ENCODE measurements at regions of chr13 and their contacts with region 1.

Region 1: DNA sequence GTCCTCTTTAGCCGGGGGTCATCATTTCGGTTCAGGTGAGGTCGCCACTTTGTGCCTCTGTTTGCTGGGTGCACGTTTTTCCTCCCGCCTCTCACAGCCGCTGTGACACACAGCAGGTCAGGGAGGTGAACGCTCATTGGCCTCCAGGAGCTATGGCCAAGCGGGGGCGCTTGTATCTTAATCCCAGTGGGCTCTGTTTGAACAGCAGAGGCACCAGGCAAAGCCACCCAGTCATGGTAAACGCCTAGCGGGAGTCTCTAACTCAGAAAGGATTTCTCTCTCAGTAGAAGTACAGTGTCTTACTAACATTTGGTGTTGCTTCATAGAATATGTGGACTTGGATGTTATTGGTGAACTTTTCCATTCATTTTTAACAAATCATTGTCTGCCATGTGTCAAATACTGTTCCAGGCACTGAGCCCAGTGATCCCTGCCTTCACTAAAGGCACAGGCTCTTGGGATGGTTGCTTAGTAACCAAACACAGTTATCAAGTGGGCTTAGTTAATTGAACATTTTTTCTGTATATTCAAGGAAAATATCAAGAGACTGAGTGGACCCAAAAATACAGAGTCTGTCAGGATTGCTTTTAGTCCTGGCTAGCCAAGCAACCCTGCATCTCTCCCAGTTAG is 186.7 kb downstream of the STK24 start:
- DNase-seq: no peak
- H3K4me3 ChIP-seq: no peak overlapping the region
- H3K27ac ChIP-seq: no peak overlapping the region
- H3K4me1 ChIP-seq: no peaks in the 10 kb centered on the region
- H3K27me3 ChIP-seq: no peaks in the 10 kb centered on the region
- CTCF ChIP-seq: no peak

Region 2: DNA sequence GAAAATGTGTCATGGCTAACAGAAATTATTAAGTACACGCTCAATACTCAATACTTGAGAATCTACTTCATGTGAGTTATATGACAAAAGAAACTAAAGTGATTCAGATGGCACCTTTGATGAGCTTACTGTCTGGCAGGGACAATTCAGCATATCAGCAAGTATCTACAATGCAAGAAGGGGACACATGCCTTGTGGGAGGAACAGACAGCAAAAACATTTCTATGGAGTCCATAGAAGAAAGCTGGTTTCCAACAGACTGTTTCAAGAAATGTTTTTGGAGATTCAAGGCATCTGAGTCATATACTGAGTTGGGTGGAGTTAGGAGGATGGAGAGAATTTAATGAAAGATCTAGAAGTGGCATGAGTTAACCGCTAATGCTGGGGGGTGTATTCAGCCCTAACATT is 1113.3 kb before region 1 on chr13:
- CTCF ChIA-PET with region 1: interaction called, 10 read pairs
- POLR2A ChIA-PET with region 1: no interaction called
- intact Hi-C with region 1: no loop called
- DNase-seq: no peak
- H3K4me3 ChIP-seq: no peak overlapping the region
- H3K27ac ChIP-seq: 0 out of 2 replicates have a peak overlapping the region, but pooled peaks have one; percentile 61
- H3K4me1 ChIP-seq: peaks cover 98% of the 10 kb centered on the region
- H3K27me3 ChIP-seq: no peaks in the 10 kb centered on the region
- CTCF ChIP-seq: no peak

Region 3: GRCh38 chr13:97879646-97880310 is 510.4 kb before region 1 on chr13:
- CTCF ChIA-PET with region 1: no interaction called
- POLR2A ChIA-PET with region 1: no interaction called
- intact Hi-C with region 1: no loop called
- DNase-seq: peak; percentile 35 to 76
- H3K4me3 ChIP-seq: no peak overlapping the region
- H3K27ac ChIP-seq: no peak overlapping the region
- H3K4me1 ChIP-seq: peaks cover 13% of the 10 kb centered on the region
- H3K27me3 ChIP-seq: no peaks in the 10 kb centered on the region
- CTCF ChIP-seq: no peak

Region 4: DNA sequence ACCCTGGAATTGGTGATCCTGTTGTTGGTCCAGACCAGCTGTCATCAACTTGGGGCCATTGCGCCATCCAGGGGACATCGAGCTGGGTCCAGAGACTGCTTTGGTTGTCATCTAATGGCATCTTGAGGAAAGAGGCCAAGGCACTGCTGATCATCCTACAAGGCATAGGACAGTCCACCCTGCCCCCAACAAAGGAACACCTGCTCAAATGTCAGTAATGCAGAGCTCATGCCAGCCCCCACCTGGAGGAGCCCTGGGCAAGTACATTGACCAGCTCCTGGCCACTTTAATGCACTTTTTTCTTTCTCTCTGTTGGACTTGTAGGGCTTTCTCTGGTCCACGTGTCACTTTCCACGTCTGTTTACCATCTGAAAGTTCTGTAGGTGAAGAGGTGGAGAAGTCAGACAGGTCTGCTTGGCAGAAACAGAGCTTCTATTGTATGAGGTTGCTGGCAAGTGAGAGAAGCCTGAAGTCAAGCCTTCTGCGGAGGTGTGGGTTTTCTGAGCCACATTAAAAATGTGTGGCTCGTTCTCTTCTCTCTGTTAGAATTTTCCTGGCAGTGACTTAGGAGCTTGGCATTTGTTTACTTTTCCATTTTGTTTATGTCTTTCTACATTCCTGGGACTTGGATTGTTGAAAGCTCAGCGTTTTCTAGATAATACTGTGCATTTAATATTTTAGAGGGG is 89.1 kb before region 1 on chr13:
- CTCF ChIA-PET with region 1: interaction called, 10 read pairs
- POLR2A ChIA-PET with region 1: no interaction called
- intact Hi-C with region 1: no loop called
- DNase-seq: peak; percentile 41 to 90
- H3K4me3 ChIP-seq: peak overlapping the region; percentile 40; the same call in 1 of the 2 replicates
- H3K27ac ChIP-seq: peak overlapping the region; percentile 83
- H3K4me1 ChIP-seq: peaks cover 58% of the 10 kb centered on the region
- H3K27me3 ChIP-seq: no peaks in the 10 kb centered on the region
- CTCF ChIP-seq: no peak

Region 5: GRCh38 chr13:98576963-98577822 is 187.0 kb after region 1 on chr13 and contains the start of gene STK24:
- CTCF ChIA-PET with region 1: no interaction called
- POLR2A ChIA-PET with region 1: no interaction called
- intact Hi-C with region 1: no loop called
- DNase-seq: peak; percentile 45 to 80
- H3K4me3 ChIP-seq: peak within 1 kb of the TSS; percentile 98
- H3K27ac ChIP-seq: peak within 1 kb of the TSS; percentile 93
- H3K4me1 ChIP-seq: peaks cover 49% of the 10 kb centered on the region
- H3K27me3 ChIP-seq: no peaks in the 10 kb centered on the region
- CTCF ChIP-seq: no peak
- total RNA-seq, gene STK24: 134 and 139 TPM in 2 replicates